CD8-positive, alpha-beta T cell (primary cell): ENCODE measurements at regions of chr7 and their contacts with region 1.

Region 1: GRCh38 chr7:108863227-108863848 is 293.7 kb downstream of the DNAJB9 start:
- DNase-seq: no peak
- ATAC-seq: no peak
- H3K4me3 ChIP-seq: no peak overlapping the region
- H3K4me3 Mint-ChIP-seq: no peak overlapping the region
- H3K27ac ChIP-seq: no peak overlapping the region
- H3K27ac Mint-ChIP-seq: no peak overlapping the region
- H3K4me1 ChIP-seq: no peaks in the 10 kb centered on the region
- H3K4me1 Mint-ChIP-seq: no peaks in the 10 kb centered on the region
- H3K27me3 ChIP-seq: no peaks in the 10 kb centered on the region
- H3K27me3 Mint-ChIP-seq: no peaks in the 10 kb centered on the region
- CTCF ChIP-seq: no peak

Region 2: GRCh38 chr7:108824840-108825580 is 38.3 kb before region 1 on chr7:
- CTCF ChIA-PET with region 1: no interaction called
- POLR2A ChIA-PET with region 1: no interaction called
- intact Hi-C with region 1: no loop called
- DNase-seq: no peak
- ATAC-seq: no peak
- H3K4me3 ChIP-seq: no peak overlapping the region
- H3K4me3 Mint-ChIP-seq: no peak overlapping the region
- H3K27ac ChIP-seq: no peak overlapping the region
- H3K27ac Mint-ChIP-seq: no peak overlapping the region
- H3K4me1 ChIP-seq: no peaks in the 10 kb centered on the region
- H3K4me1 Mint-ChIP-seq: no peaks in the 10 kb centered on the region
- H3K27me3 ChIP-seq: no peaks in the 10 kb centered on the region
- H3K27me3 Mint-ChIP-seq: no peaks in the 10 kb centered on the region
- CTCF ChIP-seq: no peak

Region 3: DNA sequence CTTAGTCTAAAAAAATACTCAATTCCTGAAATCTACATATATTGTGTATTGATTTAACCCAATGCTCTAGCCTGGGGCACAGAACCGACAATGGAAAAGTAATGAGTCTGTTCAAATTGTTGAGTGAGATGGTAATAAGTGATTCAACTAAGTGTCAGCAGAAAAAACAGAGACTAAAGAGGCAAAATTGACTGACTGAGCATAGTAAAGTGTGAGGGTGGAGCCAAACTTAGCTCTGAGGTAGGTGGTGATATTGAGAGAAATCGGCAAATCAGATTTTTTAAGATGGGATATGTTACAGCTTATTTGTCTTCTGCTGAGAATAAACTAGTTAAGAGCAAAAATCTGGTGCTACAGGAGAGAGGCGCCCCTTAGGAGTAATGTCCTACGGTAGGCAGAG is 1463.6 kb after region 1 on chr7:
- CTCF ChIA-PET with region 1: no interaction called
- POLR2A ChIA-PET with region 1: no interaction called
- intact Hi-C with region 1: loop called in 1 of 2 experiments (anchors 10 kb)
- DNase-seq: no peak
- ATAC-seq: no peak
- H3K4me3 ChIP-seq: no peak overlapping the region
- H3K4me3 Mint-ChIP-seq: no peak overlapping the region
- H3K27ac ChIP-seq: no peak overlapping the region
- H3K27ac Mint-ChIP-seq: no peak overlapping the region
- H3K4me1 ChIP-seq: no peaks in the 10 kb centered on the region
- H3K4me1 Mint-ChIP-seq: no peaks in the 10 kb centered on the region
- H3K27me3 ChIP-seq: no peaks in the 10 kb centered on the region
- H3K27me3 Mint-ChIP-seq: no peaks in the 10 kb centered on the region
- CTCF ChIP-seq: no peak